Transverse colon (tissue), 4 donors: ENCODE measurements at regions of chr5 and their contacts with region 1.

Region 1: GRCh38 chr5:60368100-60368499 is 331.9 kb downstream of the DEPDC1B start:
- DNase-seq: no peak
- H3K4me3 ChIP-seq: no peak overlapping the region
- H3K27ac ChIP-seq: no peak overlapping the region
- H3K4me1 ChIP-seq: no peaks in the 10 kb centered on the region
- H3K27me3 ChIP-seq: no peaks in the 10 kb centered on the region
- CTCF ChIP-seq: no peak
- EP300 ChIP-seq: no peak
- POLR2A ChIP-seq: no peak

Region 2: GRCh38 chr5:60285910-60286309 is 82.2 kb before region 1 on chr5:
- in situ Hi-C with region 1: no loop called
- intact Hi-C with region 1: no loop called
- DNase-seq: no peak
- H3K4me3 ChIP-seq: no peak overlapping the region
- H3K27ac ChIP-seq: no peak overlapping the region
- H3K4me1 ChIP-seq: no peaks in the 10 kb centered on the region
- H3K27me3 ChIP-seq: no peaks in the 10 kb centered on the region
- CTCF ChIP-seq: no peak
- EP300 ChIP-seq: no peak
- POLR2A ChIP-seq: no peak

Region 3: DNA sequence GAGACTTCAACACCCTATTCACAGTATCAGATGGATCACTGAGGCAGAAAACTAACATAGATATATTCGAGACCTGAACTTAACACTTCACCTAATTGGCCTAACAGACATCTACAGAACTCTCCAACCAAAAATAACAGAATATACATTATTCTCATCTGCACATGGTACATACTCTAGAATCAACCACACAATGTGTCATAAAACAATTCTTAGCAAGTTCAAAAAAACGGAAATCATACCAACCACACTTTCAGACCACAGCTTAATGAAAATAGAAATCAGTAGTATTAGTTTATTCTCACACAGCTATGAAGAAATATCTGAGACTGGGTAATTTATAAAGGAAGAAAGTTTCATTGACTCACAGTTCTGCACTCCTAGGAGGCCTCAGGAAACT is 56.0 kb before region 1 on chr5:
- in situ Hi-C with region 1: no loop called
- intact Hi-C with region 1: loop called (anchors 2 kb)
- DNase-seq: no peak
- H3K4me3 ChIP-seq: no peak overlapping the region
- H3K27ac ChIP-seq: no peak overlapping the region
- H3K4me1 ChIP-seq: no peaks in the 10 kb centered on the region
- H3K27me3 ChIP-seq: no peaks in the 10 kb centered on the region
- CTCF ChIP-seq: no peak
- EP300 ChIP-seq: no peak
- POLR2A ChIP-seq: no peak